ENCODE measurements at regions of chr3 and their contacts with region 1.

Region 1: DNA sequence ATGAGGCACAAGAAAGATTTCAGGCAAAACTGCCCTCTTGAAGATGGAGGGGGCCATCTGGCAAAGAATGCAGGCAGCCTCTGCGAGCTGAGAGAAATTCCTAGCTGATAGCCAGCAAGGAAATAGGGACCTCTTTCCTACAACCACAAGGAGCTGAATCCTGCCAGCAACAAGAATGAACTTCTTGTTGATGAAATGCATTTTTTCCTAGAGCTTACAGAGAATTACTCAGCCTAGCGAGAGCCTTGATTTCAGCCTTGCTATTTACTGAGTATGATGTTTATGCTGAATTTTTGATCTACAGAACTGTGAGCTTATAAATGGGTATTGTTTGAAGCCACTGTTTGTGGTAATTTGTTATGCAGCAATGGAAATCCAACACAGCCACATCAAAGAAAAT is 148.5 kb upstream of the NAALADL2 start:
- DNase-seq: no peak
- ATAC-seq: no peak
- H3K4me3 ChIP-seq: no peak overlapping the region
- H3K27ac ChIP-seq: no peak overlapping the region
- H3K4me1 ChIP-seq: no peaks in the 10 kb centered on the region
- H3K27me3 ChIP-seq: no peaks in the 10 kb centered on the region
- CTCF ChIP-seq: no peak

Region 2: GRCh38 chr3:173819368-173819767 is 891.2 kb before region 1 on chr3:
- intact Hi-C with region 1: no loop called
- DNase-seq: no peak
- ATAC-seq: no peak
- H3K4me3 ChIP-seq: no peak overlapping the region
- H3K27ac ChIP-seq: no peak overlapping the region
- H3K4me1 ChIP-seq: no peaks in the 10 kb centered on the region
- H3K27me3 ChIP-seq: no peaks in the 10 kb centered on the region
- CTCF ChIP-seq: no peak

Region 3: DNA sequence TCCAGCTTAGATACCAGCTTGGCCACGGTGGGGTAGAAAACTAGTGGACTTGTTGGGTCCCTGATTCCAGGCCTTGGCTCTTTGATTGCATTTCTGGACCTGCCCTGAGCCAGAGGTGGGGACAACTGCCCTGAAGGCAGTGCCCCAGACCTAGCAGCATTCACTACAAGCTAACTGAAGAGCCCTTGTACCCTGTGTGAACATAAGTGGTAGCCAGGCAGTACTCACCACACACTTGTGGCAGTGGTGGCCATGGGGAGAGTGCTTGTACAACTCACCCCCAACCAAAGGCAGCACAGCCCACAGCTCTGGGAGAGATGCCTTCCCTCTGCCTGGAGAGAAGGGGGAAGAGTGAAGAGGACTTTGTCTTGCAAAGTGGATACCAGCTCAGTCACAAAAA is 28.8 kb before region 1 on chr3:
- intact Hi-C with region 1: loop called in 1 of 10 experiments (anchors 1 kb)
- DNase-seq: no peak
- ATAC-seq: no peak
- H3K4me3 ChIP-seq: no peak overlapping the region
- H3K27ac ChIP-seq: no peak overlapping the region
- H3K4me1 ChIP-seq: no peaks in the 10 kb centered on the region
- H3K27me3 ChIP-seq: no peaks in the 10 kb centered on the region
- CTCF ChIP-seq: no peak